Lower leg skin (tissue), 4 donors: ENCODE measurements at regions of chr2 and their contacts with region 1.

Region 1: GRCh38 chr2:202660796-202661195 is 26.0 kb downstream of the FAM117B start:
- DNase-seq: no peak
- H3K4me3 ChIP-seq: no peak overlapping the region
- CTCF ChIP-seq: no peak
- POLR2A ChIP-seq: no peak

Region 2: GRCh38 chr2:201754717-201755415 is 905.9 kb before region 1 on chr2:
- intact Hi-C with region 1: no loop called
- DNase-seq: no peak
- H3K4me3 ChIP-seq: no peak overlapping the region
- CTCF ChIP-seq: no peak
- POLR2A ChIP-seq: no peak

Region 3: DNA sequence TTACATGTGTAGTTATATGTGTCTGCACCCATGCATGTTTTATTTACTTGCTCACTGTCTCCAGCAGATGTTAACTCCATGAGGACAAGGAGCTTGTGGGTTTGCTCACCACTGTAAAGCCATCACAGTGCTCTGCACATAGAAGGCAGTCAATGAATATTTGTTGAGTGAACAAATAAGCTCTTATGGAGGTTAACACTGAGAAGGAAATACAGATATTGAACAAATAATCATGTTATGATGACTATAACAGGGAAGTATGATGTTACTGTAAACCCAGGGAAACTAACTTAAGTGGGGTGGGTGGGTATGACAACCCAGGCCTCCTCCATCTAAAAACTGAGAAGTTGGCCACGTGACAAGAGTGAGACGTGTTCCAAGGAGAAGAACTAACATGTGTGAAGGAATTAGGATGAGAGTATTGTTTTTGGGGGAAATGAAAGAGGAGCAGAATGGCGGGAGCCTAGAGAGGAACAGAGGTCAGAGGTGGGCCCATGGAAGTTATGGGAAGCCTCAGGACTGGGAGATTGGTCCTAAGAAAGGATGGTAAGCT is 32.1 kb before region 1 on chr2:
- intact Hi-C with region 1: loop called (anchors 5 kb)
- DNase-seq: no peak
- H3K4me3 ChIP-seq: no peak overlapping the region
- CTCF ChIP-seq: no peak
- POLR2A ChIP-seq: no peak

Region 4: DNA sequence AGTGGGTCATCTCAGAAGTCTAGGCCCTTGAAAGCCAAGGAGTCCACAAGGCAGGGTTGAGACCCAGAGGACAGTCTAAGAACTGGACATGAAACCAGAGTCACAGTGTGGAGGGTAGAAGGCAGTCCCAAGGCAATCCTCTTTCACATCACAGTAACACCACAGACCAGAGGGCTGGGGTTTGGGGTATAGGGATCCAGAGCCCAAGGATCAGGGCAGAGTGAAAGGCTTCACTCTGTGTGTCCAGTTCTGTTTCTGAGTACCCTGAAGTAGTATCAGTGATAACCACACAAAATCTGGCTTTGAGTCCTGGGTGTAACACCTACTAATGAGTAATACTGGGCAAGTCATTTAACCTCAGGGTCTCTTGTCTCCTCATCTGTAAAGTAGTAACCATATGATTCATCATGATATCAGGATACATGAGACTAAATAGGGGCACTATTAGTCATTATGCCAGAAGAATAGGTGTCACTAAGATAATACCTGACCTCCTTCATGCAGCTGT is 119.8 kb after region 1 on chr2:
- intact Hi-C with region 1: no loop called
- DNase-seq: no peak
- H3K4me3 ChIP-seq: no peak overlapping the region
- CTCF ChIP-seq: no peak
- POLR2A ChIP-seq: no peak